Activated B cell treated with CpG ODN at 0.5 μM for 24 hours (primary cell): ENCODE measurements at regions of chr5 and their contacts with region 1.

Region 1: DNA sequence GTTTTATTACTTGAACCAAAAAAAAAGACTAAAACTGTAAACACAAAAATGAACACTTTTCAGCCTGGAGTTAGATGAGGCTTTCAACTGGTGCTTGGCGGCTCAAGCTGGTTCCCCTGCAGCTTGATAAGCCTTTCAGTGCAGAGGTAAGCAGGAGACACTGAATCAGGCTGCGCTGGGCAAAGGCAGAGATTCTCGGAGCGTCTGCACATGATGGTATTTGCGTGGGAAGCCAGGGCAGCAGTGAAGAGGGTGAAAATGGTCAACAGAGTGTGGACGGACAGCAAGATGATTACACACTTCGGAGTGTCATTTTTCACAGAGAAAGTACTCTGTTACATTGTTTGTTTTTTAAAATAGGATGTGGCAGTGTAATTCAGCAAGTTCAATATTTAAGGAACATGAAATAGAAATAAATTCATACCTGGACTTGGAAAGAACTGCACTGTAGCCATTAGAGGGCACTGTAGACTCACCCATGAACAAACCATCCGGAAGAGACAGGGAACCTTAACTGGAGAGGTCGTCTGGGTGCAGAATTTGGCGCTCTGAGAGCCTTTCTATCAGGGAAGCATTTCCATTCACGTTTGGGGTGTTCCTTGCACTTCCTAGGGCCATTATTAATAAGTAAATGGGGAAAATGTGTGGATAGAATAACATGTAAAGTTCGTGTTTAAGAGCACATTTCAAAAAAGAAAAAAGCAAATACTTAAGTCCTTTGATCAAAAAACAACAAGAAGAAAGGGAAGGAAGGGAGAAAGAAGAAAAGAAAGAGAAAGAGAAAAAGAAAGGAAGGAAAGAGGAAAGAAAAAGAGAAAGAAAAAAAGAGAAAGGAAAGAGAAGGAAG is 69.8 kb downstream of the ICE1 start:
- DNase-seq: no peak
- ATAC-seq: no peak
- H3K4me3 Mint-ChIP-seq: peak overlapping the region; percentile 66
- H3K27ac Mint-ChIP-seq: no peak overlapping the region
- H3K4me1 Mint-ChIP-seq: peaks cover 23% of the 10 kb centered on the region
- H3K27me3 Mint-ChIP-seq: no peaks in the 10 kb centered on the region
- CTCF ChIP-seq: no peak

Region 2: GRCh38 chr5:5421961-5422818 is 70.1 kb before region 1 on chr5 and contains the start of gene ICE1:
- CTCF ChIA-PET with region 1: interaction called, 4 read pairs
- POLR2A ChIA-PET with region 1: no interaction called
- intact Hi-C with region 1: loop called (anchors 2 kb)
- DNase-seq: peak; percentile 92
- ATAC-seq: peak; percentile 87
- H3K4me3 Mint-ChIP-seq: peak within 1 kb of the TSS; percentile 96
- H3K27ac Mint-ChIP-seq: peak within 1 kb of the TSS; percentile 95
- H3K4me1 Mint-ChIP-seq: peaks cover 15% of the 10 kb centered on the region
- H3K27me3 Mint-ChIP-seq: no peaks in the 10 kb centered on the region
- CTCF ChIP-seq: no peak
- total RNA-seq, gene ICE1: 32.7 and 36.8 TPM in 2 replicates

Region 3: DNA sequence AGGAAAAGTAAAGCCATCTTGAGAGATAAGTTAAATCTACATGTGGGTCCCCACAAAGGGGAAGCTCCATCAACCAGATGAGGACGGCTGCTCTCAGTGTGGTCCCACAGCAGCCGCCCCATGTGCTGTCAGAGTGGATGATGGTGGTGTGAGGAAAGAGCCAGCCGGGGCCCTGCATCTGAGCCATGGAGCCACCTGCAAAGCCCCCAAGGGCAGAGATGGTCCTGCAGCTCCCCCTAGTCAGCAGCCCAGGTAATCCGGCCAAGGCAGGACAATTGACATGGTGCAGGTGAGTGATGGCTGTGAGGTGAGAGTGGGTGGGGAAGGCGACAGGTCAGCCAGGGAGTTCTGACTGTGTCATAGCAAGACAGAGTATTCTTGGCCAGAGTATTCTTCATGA is 389.0 kb after region 1 on chr5:
- CTCF ChIA-PET with region 1: interaction called, 19 read pairs
- POLR2A ChIA-PET with region 1: no interaction called
- intact Hi-C with region 1: loop called (anchors 1 kb)
- DNase-seq: no peak
- ATAC-seq: no peak
- H3K4me3 Mint-ChIP-seq: no peak overlapping the region
- H3K27ac Mint-ChIP-seq: no peak overlapping the region
- H3K4me1 Mint-ChIP-seq: no peaks in the 10 kb centered on the region
- H3K27me3 Mint-ChIP-seq: peaks cover 10% of the 10 kb centered on the region
- CTCF ChIP-seq: no peak

Region 4: GRCh38 chr5:6525910-6526309 is 1033.6 kb after region 1 on chr5:
- CTCF ChIA-PET with region 1: no interaction called
- POLR2A ChIA-PET with region 1: no interaction called
- intact Hi-C with region 1: loop called (anchors 2 kb)
- DNase-seq: no peak
- ATAC-seq: no peak
- H3K4me3 Mint-ChIP-seq: no peak overlapping the region
- H3K27ac Mint-ChIP-seq: no peak overlapping the region
- H3K4me1 Mint-ChIP-seq: no peaks in the 10 kb centered on the region
- H3K27me3 Mint-ChIP-seq: peaks cover 9% of the 10 kb centered on the region
- CTCF ChIP-seq: no peak

Region 5: DNA sequence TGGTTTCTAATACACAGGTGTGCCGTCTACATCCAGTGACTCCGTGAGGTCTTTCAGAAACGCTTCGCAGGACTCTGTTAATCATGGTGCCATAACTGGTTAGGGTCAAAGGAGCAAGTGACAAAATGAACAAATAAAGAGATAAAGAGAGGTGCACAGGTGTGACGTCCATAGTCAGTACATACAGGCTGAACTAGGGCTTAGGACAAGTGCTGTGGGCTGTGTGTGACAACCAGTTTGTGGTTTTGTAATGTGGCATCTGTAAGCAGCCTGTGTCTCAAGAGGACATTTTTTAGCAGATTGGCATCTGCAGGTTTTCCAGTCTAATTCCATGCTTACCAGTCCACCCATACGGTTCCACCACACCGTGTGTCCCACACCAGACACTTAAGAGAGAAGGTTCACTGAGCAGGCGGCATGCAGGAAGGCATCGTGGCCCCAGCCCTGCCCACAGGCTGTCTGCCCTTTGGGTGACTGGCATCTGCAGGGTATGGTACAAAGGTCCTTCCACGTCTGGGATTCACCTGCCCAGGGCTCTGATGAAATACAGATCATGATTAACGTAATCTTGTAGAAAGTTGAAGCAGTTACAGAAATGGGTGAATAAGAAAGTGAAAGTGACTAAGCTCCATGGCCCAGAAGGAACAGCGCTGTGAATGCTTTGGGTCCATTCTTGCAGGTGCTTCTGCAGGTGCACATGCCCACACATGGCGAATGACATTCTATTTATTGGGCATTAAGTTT is 1167.8 kb after region 1 on chr5:
- CTCF ChIA-PET with region 1: no interaction called
- POLR2A ChIA-PET with region 1: no interaction called
- intact Hi-C with region 1: loop called (anchors 1 kb)
- DNase-seq: peak; percentile 35
- ATAC-seq: peak; percentile 78
- H3K4me3 Mint-ChIP-seq: peak overlapping the region; percentile 80
- H3K27ac Mint-ChIP-seq: peak overlapping the region; percentile 96
- H3K4me1 Mint-ChIP-seq: peaks cover 31% of the 10 kb centered on the region
- H3K27me3 Mint-ChIP-seq: no peaks in the 10 kb centered on the region
- CTCF ChIP-seq: no peak

Region 6: DNA sequence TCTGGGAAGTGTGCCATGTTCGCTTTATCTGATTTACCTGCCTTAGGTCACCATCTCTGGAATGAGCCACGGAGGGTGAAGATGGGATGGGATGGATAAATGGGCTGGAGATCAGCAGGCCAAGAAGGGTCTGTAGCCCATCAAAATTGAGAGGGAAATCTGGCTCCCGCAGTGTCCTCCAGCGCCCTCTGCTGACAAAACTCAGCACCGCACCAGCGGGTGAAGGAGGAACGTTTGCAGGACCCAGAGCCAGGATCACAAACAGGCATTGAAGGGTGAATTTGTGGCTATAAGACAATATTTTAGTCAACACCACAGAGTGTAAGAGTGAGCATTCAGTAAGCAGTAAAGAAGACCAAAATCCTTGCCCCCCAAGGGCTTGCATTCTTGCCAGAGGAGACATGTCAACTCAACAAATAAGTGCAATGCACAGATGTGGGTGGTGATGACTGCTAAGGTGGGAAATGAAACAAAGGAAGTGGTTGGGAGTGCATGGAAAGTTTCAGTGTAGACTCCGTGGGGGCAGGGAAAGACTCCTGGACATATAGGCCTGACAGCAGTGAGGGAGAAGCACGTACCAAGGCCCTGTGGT is 1345.3 kb after region 1 on chr5:
- CTCF ChIA-PET with region 1: no interaction called
- POLR2A ChIA-PET with region 1: no interaction called
- intact Hi-C with region 1: loop called (anchors 10 kb)
- DNase-seq: no peak
- ATAC-seq: no peak
- H3K4me3 Mint-ChIP-seq: no peak overlapping the region
- H3K27ac Mint-ChIP-seq: no peak overlapping the region
- H3K4me1 Mint-ChIP-seq: no peaks in the 10 kb centered on the region
- H3K27me3 Mint-ChIP-seq: peaks cover 2% of the 10 kb centered on the region
- CTCF ChIP-seq: no peak